AG04450 (cell line): ENCODE measurements at regions of chr6 and their contacts with region 1.

Region 1: DNA sequence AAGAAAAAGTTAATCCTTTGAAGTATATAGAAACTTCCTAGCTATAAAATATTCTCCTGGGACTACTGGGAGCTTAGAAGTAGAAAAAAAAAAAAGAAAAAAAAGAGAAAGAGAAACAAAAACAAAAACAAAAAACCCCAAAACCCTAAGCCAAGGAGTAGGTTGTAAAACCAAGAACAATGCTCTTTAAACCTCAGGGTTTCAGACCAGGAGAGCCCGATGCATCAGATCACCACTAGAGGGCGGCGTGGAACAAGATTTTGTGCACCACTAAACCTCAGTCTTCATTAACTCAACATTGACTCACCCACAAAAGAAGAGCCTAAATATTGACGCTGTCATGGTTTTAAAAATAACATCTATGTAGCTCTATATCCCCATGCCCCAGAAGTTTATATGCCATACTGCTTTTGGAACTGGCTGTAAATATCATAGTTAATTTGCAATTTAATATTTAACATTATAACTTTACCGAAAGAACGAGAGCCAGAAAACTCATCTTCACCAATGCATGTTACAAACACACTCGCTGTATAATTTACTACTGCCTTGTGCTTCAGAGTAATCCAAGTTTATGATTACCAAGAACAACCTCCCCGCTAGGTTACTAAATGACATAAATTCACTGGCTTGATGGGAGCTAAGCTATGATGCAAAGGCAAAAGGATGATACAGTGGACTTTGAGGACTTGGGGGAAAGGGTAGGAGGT is 19.2 kb downstream of the MCUR1 start:
- DNase-seq: peak; percentile 56
- H3K4me3 ChIP-seq: no peak overlapping the region
- H3K27ac ChIP-seq: no peak overlapping the region
- H3K27me3 ChIP-seq: no peaks in the 10 kb centered on the region
- CTCF ChIP-seq: peak; percentile 95

Region 2: GRCh38 chr6:13710552-13711323 is 84.5 kb before region 1 on chr6:
- CTCF ChIA-PET with region 1: interaction called, 14 read pairs
- POLR2A ChIA-PET with region 1: no interaction called
- DNase-seq: no peak
- H3K4me3 ChIP-seq: peak overlapping the region; percentile 78
- H3K27ac ChIP-seq: no peak overlapping the region
- H3K27me3 ChIP-seq: no peaks in the 10 kb centered on the region
- CTCF ChIP-seq: no peak

Region 3: GRCh38 chr6:13762611-13763441 is 32.4 kb before region 1 on chr6:
- CTCF ChIA-PET with region 1: interaction called, 21 read pairs
- POLR2A ChIA-PET with region 1: no interaction called
- DNase-seq: peak; percentile 81
- H3K4me3 ChIP-seq: peak overlapping the region; percentile 3; the same call in 1 of the 2 replicates
- H3K27ac ChIP-seq: peak overlapping the region; percentile 65
- H3K27me3 ChIP-seq: no peaks in the 10 kb centered on the region
- CTCF ChIP-seq: no peak

Region 4: DNA sequence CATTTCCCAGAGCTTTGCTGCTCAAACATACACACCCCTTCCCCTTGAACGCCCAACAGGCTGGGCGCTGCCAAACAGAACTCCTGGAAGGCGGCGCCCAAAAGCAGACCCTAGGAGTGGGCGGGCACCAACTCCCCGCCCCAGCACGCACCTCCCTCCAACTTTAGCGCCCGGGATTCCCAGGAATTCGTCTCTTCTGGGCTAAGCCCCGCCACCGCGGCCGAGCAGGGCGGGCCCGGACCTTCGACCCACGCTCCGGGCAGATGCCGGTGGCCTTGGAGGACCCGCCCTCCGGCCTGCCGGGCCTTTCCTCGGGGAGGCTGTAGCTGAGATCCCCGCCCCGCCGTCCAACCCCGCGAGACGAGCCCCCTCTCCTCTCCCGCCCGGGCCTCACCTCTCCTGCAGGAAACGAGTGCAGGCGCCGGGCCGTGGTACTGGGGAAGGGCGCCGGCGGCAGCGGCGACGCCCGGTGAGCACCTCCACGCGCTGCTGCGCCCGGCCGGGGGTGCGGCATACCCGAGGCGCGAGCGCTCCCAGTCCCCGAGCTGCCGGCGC is 18.5 kb after region 1 on chr6:
- CTCF ChIA-PET with region 1: interaction called, 87 read pairs
- POLR2A ChIA-PET with region 1: interaction called, 4 read pairs
- DNase-seq: peak; percentile 15
- H3K4me3 ChIP-seq: peak overlapping the region; percentile 75
- H3K27ac ChIP-seq: peak overlapping the region; percentile 52
- H3K27me3 ChIP-seq: no peaks in the 10 kb centered on the region
- CTCF ChIP-seq: no peak

Region 5: GRCh38 chr6:13827032-13827431 is 31.8 kb after region 1 on chr6:
- CTCF ChIA-PET with region 1: no interaction called
- POLR2A ChIA-PET with region 1: no interaction called
- DNase-seq: no peak
- H3K4me3 ChIP-seq: no peak overlapping the region
- H3K27ac ChIP-seq: no peak overlapping the region
- H3K27me3 ChIP-seq: peaks cover 8% of the 10 kb centered on the region
- CTCF ChIP-seq: no peak

Region 6: DNA sequence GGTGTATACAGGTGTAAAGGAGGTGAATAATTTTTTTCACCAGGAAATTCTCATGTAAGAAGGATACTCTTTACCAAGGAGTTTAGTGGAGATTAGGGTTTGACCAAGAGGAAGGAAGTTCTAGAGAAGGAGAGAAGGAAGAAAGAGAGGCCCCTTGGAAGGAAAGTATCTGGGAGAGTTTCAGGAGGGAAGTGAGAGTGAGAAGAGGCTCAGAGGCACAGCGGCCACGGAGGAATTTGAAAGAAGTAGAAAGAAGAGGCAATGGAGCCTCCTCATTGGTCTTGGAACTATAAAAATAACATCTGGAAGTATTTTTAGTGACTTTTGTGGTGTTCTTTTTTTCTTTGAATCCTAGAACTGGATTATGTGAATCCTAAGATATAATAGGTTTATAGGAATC is 69.9 kb after region 1 on chr6:
- CTCF ChIA-PET with region 1: no interaction called
- POLR2A ChIA-PET with region 1: no interaction called
- DNase-seq: no peak
- H3K4me3 ChIP-seq: no peak overlapping the region
- H3K27ac ChIP-seq: no peak overlapping the region
- H3K27me3 ChIP-seq: peaks cover 16% of the 10 kb centered on the region
- CTCF ChIP-seq: no peak

Region 7: DNA sequence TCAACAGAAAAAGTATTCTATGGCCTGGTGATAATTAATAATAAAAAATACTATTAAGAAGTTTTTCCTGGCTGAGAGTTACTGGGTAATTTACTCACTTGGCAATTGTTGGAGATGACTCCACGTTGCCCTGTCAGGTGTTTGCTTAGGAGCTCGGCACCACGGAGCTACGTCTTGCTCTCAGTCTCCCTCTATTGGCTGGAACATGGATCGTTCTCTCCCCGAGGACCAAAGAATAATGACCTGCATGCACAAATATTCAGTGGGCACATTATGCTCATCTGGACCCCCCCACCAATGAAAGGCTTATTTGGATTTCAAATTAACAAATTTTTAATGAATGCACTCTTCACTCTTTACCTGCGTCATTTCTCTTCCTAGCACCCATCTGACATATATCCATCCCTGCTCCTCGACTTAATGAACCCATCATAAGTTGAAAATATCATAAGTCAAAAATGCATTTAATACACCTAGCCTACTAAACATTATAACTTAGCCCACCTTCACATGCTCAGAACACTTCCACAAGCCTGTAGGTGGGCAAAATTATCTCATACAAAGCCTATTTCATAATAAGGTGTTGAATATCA is 251.4 kb after region 1 on chr6:
- CTCF ChIA-PET with region 1: interaction called, 10 read pairs
- POLR2A ChIA-PET with region 1: no interaction called
- DNase-seq: no peak
- H3K4me3 ChIP-seq: no peak overlapping the region
- H3K27ac ChIP-seq: no peak overlapping the region
- H3K27me3 ChIP-seq: no peaks in the 10 kb centered on the region
- CTCF ChIP-seq: peak; percentile 84